ENCODE measurements at regions of chr7 and their contacts with region 1.

Region 1: DNA sequence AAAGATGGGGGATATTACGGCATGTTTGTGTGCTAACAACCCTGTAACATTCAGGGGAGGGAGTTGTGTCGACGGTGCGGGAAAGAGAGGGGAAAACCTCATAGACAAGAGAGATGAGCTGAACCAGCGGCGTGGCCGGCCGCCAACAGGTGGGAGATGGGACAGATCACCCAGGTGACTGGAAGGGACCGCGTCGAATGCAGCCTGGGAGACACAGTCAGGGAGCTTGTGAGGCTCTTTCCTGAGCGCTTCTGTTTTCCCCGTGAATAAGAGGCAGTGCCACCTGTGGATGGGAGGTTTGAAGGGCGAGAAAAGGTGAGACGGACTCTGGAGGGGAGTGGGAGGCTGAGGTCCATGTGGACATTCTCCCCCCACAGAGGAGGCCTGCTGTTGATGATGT is 9.9 kb upstream of the PRKAG2 start:
- DNase-seq: peak in 1 of 5 donors; percentile 18
- H3K4me3 ChIP-seq: no peak overlapping the region
- H3K27ac ChIP-seq: no peak overlapping the region
- H3K4me1 ChIP-seq: no peaks in the 10 kb centered on the region
- H3K27me3 ChIP-seq: no peaks in the 10 kb centered on the region
- CTCF ChIP-seq: no peak
- EP300 ChIP-seq: no peak
- POLR2A ChIP-seq: no peak

Region 2: GRCh38 chr7:151853896-151854719 is 32.7 kb before region 1 on chr7:
- intact Hi-C with region 1: loop called in 1 of 4 experiments (anchors 2 kb)
- DNase-seq: no peak
- H3K4me3 ChIP-seq: no peak overlapping the region
- H3K27ac ChIP-seq: no peak overlapping the region
- H3K4me1 ChIP-seq: no peaks in the 10 kb centered on the region
- H3K27me3 ChIP-seq: no peaks in the 10 kb centered on the region
- CTCF ChIP-seq: no peak
- EP300 ChIP-seq: no peak
- POLR2A ChIP-seq: no peak

Measured in ovary (tissue), 10 donors.